Posterior vena cava (tissue), 2 donors: ENCODE measurements at regions of chr3 and their contacts with region 1.

Region 1: DNA sequence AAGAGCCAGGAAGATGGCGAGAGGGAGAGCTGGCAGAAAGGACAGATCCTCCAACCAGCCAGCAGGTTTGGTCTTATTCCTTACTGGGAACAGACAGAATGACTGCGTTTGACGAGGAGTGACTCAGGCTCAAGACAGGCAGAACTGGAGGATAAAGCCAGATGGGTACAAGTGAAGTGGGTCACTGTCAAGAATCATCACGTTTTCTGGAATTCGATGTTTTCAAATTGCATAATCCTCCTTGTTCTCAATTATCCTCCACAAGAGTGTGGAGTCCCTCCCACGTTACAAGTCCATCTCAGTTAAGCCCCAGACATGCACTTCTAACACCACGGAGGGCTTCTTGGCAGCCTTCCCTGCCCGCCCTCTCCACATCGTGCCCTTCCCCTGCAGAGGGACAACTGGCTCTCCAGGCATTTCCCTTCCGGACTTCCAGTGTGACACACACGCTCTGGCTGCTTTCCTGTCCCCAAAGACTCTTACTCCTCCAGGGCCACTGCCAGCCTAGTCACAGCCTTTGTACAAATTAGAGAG is 183.1 kb downstream of the CHST2 start:
- DNase-seq: peak; percentile 84

Region 2: DNA sequence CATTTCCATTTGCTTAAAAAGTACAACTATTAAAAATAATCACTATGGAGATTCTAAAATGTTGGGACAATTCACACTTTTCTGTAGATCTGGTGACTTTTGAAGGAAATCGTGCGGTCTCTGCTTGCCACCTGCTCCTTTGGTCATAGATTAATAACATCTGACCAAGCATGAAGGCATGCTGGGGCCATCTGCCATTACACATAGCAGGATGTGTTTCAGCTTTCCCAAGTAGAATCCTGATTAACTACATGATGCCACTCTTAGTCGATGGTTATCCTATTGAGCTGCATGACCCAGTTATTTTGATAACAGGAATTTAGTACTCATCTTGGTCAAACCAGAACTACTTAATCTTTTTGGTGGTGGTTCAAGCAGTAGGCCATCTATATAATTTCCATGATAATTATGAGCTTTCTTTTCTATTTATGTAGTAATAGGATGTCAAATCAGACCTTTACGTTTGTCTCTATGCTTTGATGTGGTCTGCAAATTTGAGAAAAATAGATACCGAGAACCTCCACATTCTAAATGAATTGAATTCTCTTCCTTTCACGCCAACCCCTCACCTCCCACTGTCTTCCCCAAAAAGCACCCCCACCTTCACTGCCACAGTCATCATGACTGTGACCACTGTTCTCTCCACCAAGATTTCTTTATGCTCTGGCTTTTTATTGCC is 827.0 kb after region 1 on chr3:
- intact Hi-C with region 1: loop called in 1 of 2 experiments (anchors 10 kb)
- DNase-seq: no peak